A673 (cell line): ENCODE measurements at regions of chr7 and their contacts with region 1.

Region 1: DNA sequence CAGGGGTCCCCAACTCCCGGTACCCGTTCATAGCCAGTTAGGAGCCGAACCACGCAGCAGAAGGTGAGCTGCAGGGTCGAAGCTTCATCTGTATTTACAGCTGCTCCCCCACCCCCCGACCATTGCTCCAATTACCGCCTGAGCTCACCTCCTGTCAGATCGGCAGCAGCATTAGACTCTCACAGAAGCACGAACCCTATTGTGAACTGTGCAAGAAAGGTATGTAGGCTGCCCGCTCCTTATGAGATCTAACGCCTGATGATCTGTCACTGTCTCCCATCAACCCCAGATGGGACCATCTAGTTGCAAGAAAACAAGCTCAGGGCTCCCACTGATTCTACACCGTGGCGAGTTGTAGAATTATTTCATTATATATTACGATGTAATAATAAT is 14.6 kb upstream of the AZGP1 start:
- DNase-seq: no peak
- H3K4me3 ChIP-seq: peak overlapping the region; percentile 19
- H3K27ac ChIP-seq: no peak overlapping the region
- H3K4me1 ChIP-seq: no peaks in the 10 kb centered on the region
- H3K27me3 ChIP-seq: no peaks in the 10 kb centered on the region
- CTCF ChIP-seq: no peak

Region 2: DNA sequence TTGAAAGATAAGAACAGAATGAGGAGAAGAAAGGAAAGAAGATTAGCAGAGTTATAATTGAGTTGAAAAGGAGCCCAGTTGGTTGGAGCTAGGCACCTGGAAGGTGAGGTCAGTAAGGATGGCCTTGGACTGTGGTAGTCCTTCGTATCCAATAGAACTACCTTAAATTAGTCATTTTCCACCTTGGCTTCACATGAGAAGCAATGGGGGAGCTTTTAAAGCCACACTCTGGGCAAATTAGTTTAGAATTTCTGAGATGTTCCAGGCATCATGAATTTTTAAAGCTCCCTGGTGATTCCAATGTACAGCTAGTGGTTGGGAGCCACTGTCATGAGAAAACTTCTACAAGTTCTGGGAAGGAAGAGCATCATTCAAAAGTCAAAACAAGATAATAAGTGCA is 283.4 kb before region 1 on chr7:
- CTCF ChIA-PET with region 1: no interaction called
- POLR2A ChIA-PET with region 1: no interaction called
- intact Hi-C with region 1: no loop called
- DNase-seq: no peak
- H3K4me3 ChIP-seq: no peak overlapping the region
- H3K27ac ChIP-seq: no peak overlapping the region
- H3K4me1 ChIP-seq: no peaks in the 10 kb centered on the region
- H3K27me3 ChIP-seq: no peaks in the 10 kb centered on the region
- CTCF ChIP-seq: no peak

Region 3: DNA sequence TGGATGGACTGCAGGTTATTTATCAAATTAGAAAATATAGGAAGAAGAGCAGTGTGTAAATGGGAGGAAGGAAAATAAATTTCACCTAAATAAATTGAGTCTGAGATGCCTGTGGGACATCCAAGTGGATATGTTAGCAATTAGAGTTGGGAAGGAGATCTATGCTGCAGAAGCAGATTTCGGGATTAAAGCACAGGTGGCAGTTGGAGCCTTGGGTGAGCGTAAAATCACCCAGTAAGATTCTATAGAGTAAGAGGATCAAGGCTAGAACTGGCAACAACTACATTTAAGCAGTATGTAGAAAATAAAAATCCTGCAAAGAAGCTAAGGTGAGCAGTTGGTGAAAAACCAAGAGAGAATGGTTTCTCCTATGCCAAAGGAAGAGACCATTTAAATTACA is 79.5 kb before region 1 on chr7:
- CTCF ChIA-PET with region 1: interaction called, 9 read pairs
- POLR2A ChIA-PET with region 1: no interaction called
- intact Hi-C with region 1: loop called (anchors 1 kb)
- DNase-seq: no peak
- H3K4me3 ChIP-seq: no peak overlapping the region
- H3K27ac ChIP-seq: no peak overlapping the region
- H3K4me1 ChIP-seq: no peaks in the 10 kb centered on the region
- H3K27me3 ChIP-seq: no peaks in the 10 kb centered on the region
- CTCF ChIP-seq: no peak

Region 4: GRCh38 chr7:100049441-100050311 is 59.2 kb after region 1 on chr7 and contains the start of gene ZSCAN21:
- CTCF ChIA-PET with region 1: interaction called, 3 read pairs
- POLR2A ChIA-PET with region 1: no interaction called
- intact Hi-C with region 1: loop called (anchors 5 kb)
- DNase-seq: peak; percentile 89
- H3K4me3 ChIP-seq: peak within 1 kb of the TSS; percentile 89
- H3K27ac ChIP-seq: peak within 1 kb of the TSS; percentile 83
- H3K4me1 ChIP-seq: peaks cover 9% of the 10 kb centered on the region
- H3K27me3 ChIP-seq: no peaks in the 10 kb centered on the region
- CTCF ChIP-seq: 0 out of 2 replicates have a peak, but pooled peaks have one; percentile 30
- total RNA-seq, gene ZSCAN21: 17.2 and 21.7 TPM in 2 replicates

Region 5: GRCh38 chr7:100101016-100101862 is 110.8 kb after region 1 on chr7 and contains the starts of genes AP4M1 and MCM7:
- CTCF ChIA-PET with region 1: no interaction called
- POLR2A ChIA-PET with region 1: no interaction called
- intact Hi-C with region 1: no loop called
- DNase-seq: peak; percentile 100
- H3K4me3 ChIP-seq: peak within 1 kb of the TSS; percentile 71
- H3K27ac ChIP-seq: peak within 1 kb of the TSS; percentile 99
- H3K4me1 ChIP-seq: peaks cover 21% of the 10 kb centered on the region
- H3K27me3 ChIP-seq: no peaks in the 10 kb centered on the region
- CTCF ChIP-seq: no peak
- total RNA-seq, gene AP4M1: 24.0 and 25.1 TPM in 2 replicates
- total RNA-seq, gene MCM7: 399 and 418 TPM in 2 replicates

Region 6: DNA sequence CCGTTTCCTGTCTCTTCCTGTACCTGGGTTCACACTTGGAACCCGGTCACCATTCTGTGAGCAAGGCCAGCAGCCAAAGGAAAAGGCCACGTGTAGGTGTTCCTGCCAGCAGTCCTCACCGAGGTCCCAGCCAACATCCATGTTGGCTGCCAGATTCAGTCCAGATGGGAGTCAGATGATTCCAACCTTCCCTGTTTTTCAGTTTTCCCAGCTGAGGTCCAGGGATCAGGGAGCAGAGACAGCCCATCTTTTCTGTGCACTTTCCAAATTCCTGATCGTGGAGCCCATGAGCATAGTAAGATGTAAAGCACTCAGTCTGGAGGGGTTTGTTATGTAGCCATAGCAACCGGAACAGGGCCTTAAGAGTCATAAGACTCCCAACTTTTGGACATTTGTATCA is 225.4 kb after region 1 on chr7:
- CTCF ChIA-PET with region 1: interaction called, 3 read pairs
- POLR2A ChIA-PET with region 1: no interaction called
- intact Hi-C with region 1: loop called (anchors 5 kb)
- DNase-seq: no peak
- H3K4me3 ChIP-seq: no peak overlapping the region
- H3K27ac ChIP-seq: no peak overlapping the region
- H3K4me1 ChIP-seq: no peaks in the 10 kb centered on the region
- H3K27me3 ChIP-seq: no peaks in the 10 kb centered on the region
- CTCF ChIP-seq: no peak